Activated naive CD4-positive, alpha-beta T cell treated with anti-CD3 and anti-CD28 coated beads, Interleukin-2, amount 10 ng/mL, durations not matched to agents 7 days and 5 days (primary cell): ENCODE measurements at regions of chr6 and their contacts with region 1.

Region 1: DNA sequence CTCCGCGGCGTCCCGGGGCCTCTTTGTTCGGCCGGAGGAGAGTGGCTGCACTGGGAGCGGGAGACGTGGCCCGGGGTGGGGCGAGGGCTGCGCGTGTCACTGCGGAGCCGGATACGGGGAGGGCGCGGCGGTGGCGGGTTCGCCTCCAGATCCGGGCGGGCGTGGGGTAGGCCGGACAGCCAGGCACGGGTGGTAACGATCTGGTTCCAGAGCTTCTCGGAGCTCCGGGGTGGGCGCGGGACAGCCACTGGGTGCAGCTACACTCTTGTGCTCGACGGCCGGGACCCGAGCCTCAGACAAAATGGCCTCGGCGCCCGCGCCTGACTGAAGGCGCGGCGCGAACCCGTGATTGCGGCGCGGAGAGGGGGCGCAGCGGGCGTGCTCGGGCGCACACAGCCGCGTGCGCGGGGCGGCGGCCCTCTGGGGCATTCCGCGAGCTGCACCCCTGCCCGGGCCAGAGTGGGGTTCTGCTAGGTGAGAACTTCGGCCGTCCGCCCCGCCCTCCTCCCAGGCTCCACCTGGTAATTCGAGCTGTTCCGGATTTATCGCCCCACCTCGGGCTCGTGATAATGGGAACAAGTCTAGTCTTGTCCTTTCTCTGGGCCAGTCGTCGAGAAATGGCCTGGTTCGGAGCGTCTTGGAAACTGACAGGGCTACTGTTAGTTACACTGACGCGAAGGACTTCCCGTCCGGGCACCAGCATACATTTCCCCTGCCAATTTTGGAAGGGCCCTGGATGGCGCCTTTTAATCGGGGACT is 1.0 kb downstream of the LOC128125822 start:
- DNase-seq: peak; percentile 82
- H3K4me3 Mint-ChIP-seq: peak overlapping the region; percentile 85
- H3K27ac Mint-ChIP-seq: peak overlapping the region; percentile 95
- H3K4me1 Mint-ChIP-seq: peaks cover 38% of the 10 kb centered on the region
- H3K27me3 Mint-ChIP-seq: peaks cover 4% of the 10 kb centered on the region

Region 2: DNA sequence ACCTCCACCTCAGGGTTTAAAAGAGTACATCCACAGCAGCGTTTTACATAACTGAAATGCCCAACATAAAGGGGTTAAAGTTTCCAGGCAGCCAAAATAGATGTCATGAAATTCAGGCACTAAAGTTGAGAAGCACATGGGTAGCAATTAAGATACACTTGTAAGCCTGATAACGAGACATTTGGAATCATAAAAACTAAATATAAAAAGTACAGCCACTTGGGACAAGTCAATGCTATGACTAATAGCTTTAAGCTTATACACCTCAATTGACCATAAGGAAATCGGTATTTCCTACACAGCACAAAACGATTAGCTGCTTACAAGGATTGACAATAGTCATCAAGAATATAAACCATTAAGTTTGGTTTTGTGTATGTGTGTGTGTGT is 10.8 kb after region 1 on chr6:
- CTCF ChIA-PET with region 1: interaction called, 10 read pairs
- DNase-seq: no peak
- H3K4me3 Mint-ChIP-seq: no peak overlapping the region
- H3K27ac Mint-ChIP-seq: no peak overlapping the region
- H3K4me1 Mint-ChIP-seq: no peaks in the 10 kb centered on the region
- H3K27me3 Mint-ChIP-seq: no peaks in the 10 kb centered on the region

Region 3: DNA sequence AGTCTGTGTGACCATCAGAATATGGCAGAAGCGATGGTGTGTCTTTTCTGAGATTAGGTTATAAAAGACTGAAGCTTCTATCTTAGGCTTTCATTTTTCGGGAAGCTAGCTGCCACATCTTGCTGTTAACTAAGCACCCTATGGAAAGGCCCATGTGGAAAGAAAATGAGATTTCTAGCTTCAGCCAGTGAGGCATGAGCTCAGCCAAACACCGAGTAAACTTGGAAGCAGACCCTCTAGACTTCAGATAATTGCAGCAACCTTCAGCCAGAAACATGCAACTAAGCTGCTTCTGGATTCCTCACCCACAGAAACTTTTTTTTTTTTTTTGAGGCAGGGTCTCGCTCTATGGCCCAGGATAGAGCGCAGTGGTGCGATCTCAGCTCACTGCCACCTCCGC is 19.6 kb after region 1 on chr6:
- CTCF ChIA-PET with region 1: interaction called, 10 read pairs
- DNase-seq: no peak
- H3K4me3 Mint-ChIP-seq: no peak overlapping the region
- H3K27ac Mint-ChIP-seq: no peak overlapping the region
- H3K4me1 Mint-ChIP-seq: peaks cover 4% of the 10 kb centered on the region
- H3K27me3 Mint-ChIP-seq: peaks cover 20% of the 10 kb centered on the region